ENCODE measurements at regions of chr6 and their contacts with region 1.

Region 1: GRCh38 chr6:136226027-136226673 is 24.0 kb downstream of the MTFR2 start:
- DNase-seq: peak in 1 of 2 donors; percentile 52
- ATAC-seq: peak; percentile 81 to 95 (median 86)
- H3K4me3 ChIP-seq: peak overlapping the region; percentile 47
- H3K27ac ChIP-seq: no peak overlapping the region
- H3K4me1 ChIP-seq: peaks cover 4% of the 10 kb centered on the region
- H3K27me3 ChIP-seq: no peaks in the 10 kb centered on the region
- CTCF ChIP-seq: peak; percentile 100

Region 2: GRCh38 chr6:135451693-135452092 is 774.5 kb before region 1 on chr6:
- intact Hi-C with region 1: loop called in 1 of 2 experiments (anchors 2 kb)
- DNase-seq: no peak
- ATAC-seq: peak in 1 of 4 donors; percentile 56
- H3K4me3 ChIP-seq: no peak overlapping the region
- H3K27ac ChIP-seq: no peak overlapping the region
- H3K4me1 ChIP-seq: no peaks in the 10 kb centered on the region
- H3K27me3 ChIP-seq: no peaks in the 10 kb centered on the region
- CTCF ChIP-seq: peak; percentile 62

Region 3: GRCh38 chr6:135506270-135506997 is 719.7 kb before region 1 on chr6:
- intact Hi-C with region 1: loop called (anchors 2 to 5 kb)
- DNase-seq: no peak
- ATAC-seq: peak in 2 of 4 donors; percentile 49 to 74
- H3K4me3 ChIP-seq: no peak overlapping the region
- H3K27ac ChIP-seq: no peak overlapping the region
- H3K4me1 ChIP-seq: no peaks in the 10 kb centered on the region
- H3K27me3 ChIP-seq: no peaks in the 10 kb centered on the region
- CTCF ChIP-seq: peak; percentile 57

Region 4: GRCh38 chr6:135535989-135536414 is 690.1 kb before region 1 on chr6:
- intact Hi-C with region 1: loop called (anchors 2 to 5 kb)
- DNase-seq: no peak
- ATAC-seq: peak in 2 of 4 donors; percentile 37 to 40
- H3K4me3 ChIP-seq: no peak overlapping the region
- H3K27ac ChIP-seq: no peak overlapping the region
- H3K4me1 ChIP-seq: no peaks in the 10 kb centered on the region
- H3K27me3 ChIP-seq: no peaks in the 10 kb centered on the region
- CTCF ChIP-seq: peak; percentile 68

Region 5: DNA sequence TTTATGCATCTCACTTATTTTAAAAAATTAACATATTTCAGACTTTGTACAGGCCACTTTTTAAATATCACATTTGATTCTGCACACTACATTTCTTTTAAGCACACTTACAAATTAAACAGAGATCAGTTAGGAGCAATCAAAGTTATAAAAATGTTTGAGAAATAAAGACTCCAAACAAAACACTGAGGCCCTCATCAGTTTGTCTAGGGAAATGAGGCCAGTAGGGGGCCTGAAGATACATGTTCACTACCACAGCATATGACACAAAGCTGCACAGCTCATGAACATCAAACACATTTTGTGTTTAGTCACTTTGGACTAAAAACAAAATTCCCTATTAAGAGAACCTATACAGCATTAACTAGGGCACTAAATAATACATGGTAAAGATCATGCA is 194.2 kb before region 1 on chr6:
- intact Hi-C with region 1: loop called (anchors 5 to 10 kb)
- DNase-seq: no peak
- ATAC-seq: peak in 1 of 4 donors; percentile 71
- H3K4me3 ChIP-seq: no peak overlapping the region
- H3K27ac ChIP-seq: no peak overlapping the region
- H3K4me1 ChIP-seq: no peaks in the 10 kb centered on the region
- H3K27me3 ChIP-seq: no peaks in the 10 kb centered on the region
- CTCF ChIP-seq: peak; percentile 36